ENCODE measurements at regions of chr3 and their contacts with region 1.

Region 1: GRCh38 chr3:9503283-9503682 is 50.3 kb downstream of the LHFPL4 start:
- DNase-seq: peak; percentile 39
- H3K4me3 ChIP-seq: no peak overlapping the region
- H3K27ac ChIP-seq: no peak overlapping the region
- H3K4me1 ChIP-seq: peaks cover 21% of the 10 kb centered on the region
- H3K27me3 ChIP-seq: no peaks in the 10 kb centered on the region
- CTCF ChIP-seq: peak; percentile 92 to 97

Region 2: GRCh38 chr3:8970971-8971589 is 532.2 kb before region 1 on chr3:
- CTCF ChIA-PET with region 1: no interaction called
- dilution Hi-C with region 1: no loop called
- in situ Hi-C with region 1: no loop called
- intact Hi-C with region 1: loop called (anchors 1 kb)
- DNase-seq: peak; percentile 48
- H3K4me3 ChIP-seq: no peak overlapping the region
- H3K27ac ChIP-seq: no peak overlapping the region
- H3K4me1 ChIP-seq: no peaks in the 10 kb centered on the region
- H3K27me3 ChIP-seq: no peaks in the 10 kb centered on the region
- CTCF ChIP-seq: peak; percentile 98 to 99

Region 3: DNA sequence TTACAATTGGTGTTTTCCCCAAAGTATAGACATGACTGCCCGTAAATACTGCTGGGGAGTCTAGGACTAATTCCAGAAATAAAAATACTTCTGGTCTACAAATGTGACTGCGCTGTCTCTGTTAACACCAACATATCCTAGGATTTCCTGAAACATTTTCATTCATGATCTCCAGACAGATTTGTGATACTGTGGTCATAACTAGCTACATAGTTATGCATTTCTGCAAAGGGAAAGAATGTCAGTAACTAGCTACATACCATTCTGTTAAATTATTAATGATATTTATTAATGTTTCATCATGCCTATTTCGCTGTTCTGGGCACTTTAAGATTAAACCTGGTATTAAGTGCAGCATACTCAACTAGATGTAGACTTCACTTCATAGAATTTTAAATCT is 72.5 kb before region 1 on chr3:
- CTCF ChIA-PET with region 1: no interaction called
- dilution Hi-C with region 1: no loop called
- in situ Hi-C with region 1: no loop called
- intact Hi-C with region 1: no loop called
- DNase-seq: no peak
- H3K4me3 ChIP-seq: no peak overlapping the region
- H3K27ac ChIP-seq: no peak overlapping the region
- H3K4me1 ChIP-seq: peaks cover 3% of the 10 kb centered on the region
- H3K27me3 ChIP-seq: no peaks in the 10 kb centered on the region
- CTCF ChIP-seq: no peak

Region 4: DNA sequence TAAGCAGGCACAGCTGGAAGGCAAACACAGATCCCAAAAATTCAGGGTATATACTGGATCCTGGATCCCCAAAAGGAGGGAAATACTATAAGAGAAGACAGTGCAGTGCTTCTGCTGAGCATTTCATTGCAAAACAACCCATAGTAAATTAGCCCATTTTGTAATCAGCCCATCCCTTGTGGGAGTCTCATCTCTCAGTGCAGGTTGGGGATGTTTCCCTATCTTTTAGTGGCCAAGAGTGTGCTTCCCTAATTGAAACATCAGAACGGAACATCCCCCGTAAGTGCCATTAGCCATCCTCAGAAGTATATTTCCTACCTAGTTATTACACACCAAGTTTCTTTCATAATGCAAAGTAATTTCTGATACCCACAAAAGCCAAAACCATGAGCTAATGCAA is 134.9 kb after region 1 on chr3:
- CTCF ChIA-PET with region 1: interaction called, 14 read pairs
- dilution Hi-C with region 1: no loop called
- in situ Hi-C with region 1: no loop called
- intact Hi-C with region 1: no loop called
- DNase-seq: no peak
- H3K4me3 ChIP-seq: no peak overlapping the region
- H3K27ac ChIP-seq: no peak overlapping the region
- H3K4me1 ChIP-seq: no peaks in the 10 kb centered on the region
- H3K27me3 ChIP-seq: no peaks in the 10 kb centered on the region
- CTCF ChIP-seq: no peak

Region 5: GRCh38 chr3:9649791-9650521 is 146.7 kb after region 1 on chr3:
- CTCF ChIA-PET with region 1: no interaction called
- dilution Hi-C with region 1: no loop called
- in situ Hi-C with region 1: no loop called
- intact Hi-C with region 1: loop called (anchors 5 kb)
- DNase-seq: no peak
- H3K4me3 ChIP-seq: peak overlapping the region; percentile 65 to 93 (median 79)
- H3K27ac ChIP-seq: peak overlapping the region; percentile 53
- H3K4me1 ChIP-seq: peaks cover 8% of the 10 kb centered on the region
- H3K27me3 ChIP-seq: no peaks in the 10 kb centered on the region
- CTCF ChIP-seq: no peak

Region 6: GRCh38 chr3:9809615-9810432 is 306.5 kb after region 1 on chr3 and contains the start of gene TTLL3:
- CTCF ChIA-PET with region 1: interaction called, 4 read pairs
- dilution Hi-C with region 1: no loop called
- in situ Hi-C with region 1: no loop called
- intact Hi-C with region 1: loop called (anchors 5 kb)
- DNase-seq: peak; percentile 38
- H3K4me3 ChIP-seq: peak within 1 kb of the TSS; percentile 32 to 68 (median 49)
- H3K27ac ChIP-seq: peak within 1 kb of the TSS; percentile 49
- H3K4me1 ChIP-seq: peaks cover 9% of the 10 kb centered on the region
- H3K27me3 ChIP-seq: no peaks in the 10 kb centered on the region
- CTCF ChIP-seq: no peak
- total RNA-seq, gene TTLL3: 15.8 to 33.3 TPM

Region 7: GRCh38 chr3:9843715-9844438 is 340.6 kb after region 1 on chr3 and contains the start of gene RPUSD3:
- CTCF ChIA-PET with region 1: no interaction called
- dilution Hi-C with region 1: no loop called
- in situ Hi-C with region 1: no loop called
- intact Hi-C with region 1: loop called (anchors 10 kb)
- DNase-seq: peak; percentile 92
- H3K4me3 ChIP-seq: peak within 1 kb of the TSS; percentile 62 to 68 (median 67)
- H3K27ac ChIP-seq: peak within 1 kb of the TSS; percentile 29
- H3K4me1 ChIP-seq: peaks cover 16% of the 10 kb centered on the region
- H3K27me3 ChIP-seq: no peaks in the 10 kb centered on the region
- CTCF ChIP-seq: no peak
- total RNA-seq, gene RPUSD3: 35.0 to 40.8 TPM

Region 8: DNA sequence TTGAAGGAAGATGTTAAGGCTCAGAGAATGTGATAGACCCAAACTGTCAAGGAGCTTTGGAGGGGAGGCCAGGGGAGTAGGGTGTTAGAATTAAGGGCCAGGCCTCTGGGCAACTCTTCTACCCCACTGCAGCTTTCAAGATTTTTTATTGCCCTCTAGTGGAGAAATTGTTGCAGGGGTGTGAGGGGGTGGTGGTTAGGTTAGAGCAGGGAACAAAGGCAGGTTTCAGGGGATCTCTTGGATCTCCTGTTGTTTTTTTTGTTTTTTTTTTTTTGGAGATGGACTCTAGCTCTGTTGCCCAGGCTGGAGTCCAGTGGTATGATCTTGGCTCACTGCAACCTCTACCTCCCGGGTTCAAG is 819.0 kb after region 1 on chr3:
- CTCF ChIA-PET with region 1: no interaction called
- dilution Hi-C with region 1: no loop called
- in situ Hi-C with region 1: no loop called
- intact Hi-C with region 1: loop called (anchors 5 kb)
- DNase-seq: peak; percentile 9
- H3K4me3 ChIP-seq: no peak overlapping the region
- H3K27ac ChIP-seq: no peak overlapping the region
- H3K4me1 ChIP-seq: peaks cover 9% of the 10 kb centered on the region
- H3K27me3 ChIP-seq: no peaks in the 10 kb centered on the region
- CTCF ChIP-seq: peak; percentile 46 to 52